Activated CD4-positive, alpha-beta T cell treated with anti-CD3 and anti-CD28 coated beads for 36 hours (primary cell): ENCODE measurements at regions of chrX and their contacts with region 1.

Region 1: GRCh38 chrX:135973548-135974278 is at the start of gene MMGT1:
- DNase-seq: peak; percentile 92
- ATAC-seq: peak; percentile 92
- H3K4me3 Mint-ChIP-seq: peak within 1 kb of the TSS; percentile 97
- H3K27ac Mint-ChIP-seq: peak within 1 kb of the TSS; percentile 97
- H3K4me1 Mint-ChIP-seq: peaks cover 34% of the 10 kb centered on the region
- H3K27me3 Mint-ChIP-seq: no peaks in the 10 kb centered on the region
- total RNA-seq, gene MMGT1: 16.1 to 18.1 TPM

Region 2: GRCh38 chrX:135003876-135004623 is 969.7 kb before region 1 on chrX:
- CTCF ChIA-PET with region 1: no interaction called
- POLR2A ChIA-PET with region 1: no interaction called
- intact Hi-C with region 1: loop called in 1 of 2 experiments (anchors 5 kb)
- DNase-seq: peak; percentile 94
- ATAC-seq: peak; percentile 98
- H3K4me3 Mint-ChIP-seq: peak overlapping the region; percentile 78
- H3K27ac Mint-ChIP-seq: peak overlapping the region; percentile 69
- H3K4me1 Mint-ChIP-seq: peaks cover 14% of the 10 kb centered on the region
- H3K27me3 Mint-ChIP-seq: no peaks in the 10 kb centered on the region

Region 3: GRCh38 chrX:135985141-135985972 is 11.6 kb after region 1 on chrX and contains the start of gene SLC9A6:
- CTCF ChIA-PET with region 1: interaction called, 4 read pairs
- POLR2A ChIA-PET with region 1: interaction called, 4 read pairs
- intact Hi-C with region 1: loop called in 1 of 2 experiments (anchors 1 kb)
- DNase-seq: peak; percentile 81
- ATAC-seq: peak; percentile 82
- H3K4me3 Mint-ChIP-seq: peak within 1 kb of the TSS; percentile 88
- H3K27ac Mint-ChIP-seq: peak within 1 kb of the TSS; percentile 90
- H3K4me1 Mint-ChIP-seq: peaks cover 51% of the 10 kb centered on the region
- H3K27me3 Mint-ChIP-seq: no peaks in the 10 kb centered on the region
- total RNA-seq, gene SLC9A6: 11.8 to 12.6 TPM

Region 4: GRCh38 chrX:136047969-136048368 is 74.3 kb after region 1 on chrX:
- CTCF ChIA-PET with region 1: no interaction called
- POLR2A ChIA-PET with region 1: no interaction called
- intact Hi-C with region 1: no loop called
- DNase-seq: no peak
- ATAC-seq: no peak
- H3K4me3 Mint-ChIP-seq: no peak overlapping the region
- H3K27ac Mint-ChIP-seq: no peak overlapping the region
- H3K4me1 Mint-ChIP-seq: no peaks in the 10 kb centered on the region
- H3K27me3 Mint-ChIP-seq: no peaks in the 10 kb centered on the region

Region 5: DNA sequence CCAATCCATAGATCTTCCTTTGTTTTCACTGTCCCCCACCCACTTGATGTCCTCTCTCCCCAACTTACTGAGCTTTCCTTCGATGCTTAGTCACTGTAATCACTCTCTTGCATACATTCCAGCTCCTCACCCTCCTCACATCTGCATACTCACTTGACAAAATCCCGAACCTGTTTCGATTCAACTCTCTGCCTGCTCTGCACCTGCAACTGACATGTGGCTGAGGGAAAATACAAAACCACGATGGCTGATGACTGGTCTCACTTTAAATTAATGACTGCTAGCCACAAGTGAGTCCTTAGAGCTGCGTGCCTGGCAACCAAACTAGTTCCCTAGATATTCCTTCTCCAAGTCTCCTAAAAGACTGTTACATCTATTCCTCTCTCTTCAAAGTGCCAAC is 103.2 kb after region 1 on chrX:
- CTCF ChIA-PET with region 1: no interaction called
- POLR2A ChIA-PET with region 1: no interaction called
- intact Hi-C with region 1: no loop called
- DNase-seq: no peak
- ATAC-seq: no peak
- H3K4me3 Mint-ChIP-seq: no peak overlapping the region
- H3K27ac Mint-ChIP-seq: no peak overlapping the region
- H3K4me1 Mint-ChIP-seq: no peaks in the 10 kb centered on the region
- H3K27me3 Mint-ChIP-seq: peaks cover 6% of the 10 kb centered on the region

Region 6: DNA sequence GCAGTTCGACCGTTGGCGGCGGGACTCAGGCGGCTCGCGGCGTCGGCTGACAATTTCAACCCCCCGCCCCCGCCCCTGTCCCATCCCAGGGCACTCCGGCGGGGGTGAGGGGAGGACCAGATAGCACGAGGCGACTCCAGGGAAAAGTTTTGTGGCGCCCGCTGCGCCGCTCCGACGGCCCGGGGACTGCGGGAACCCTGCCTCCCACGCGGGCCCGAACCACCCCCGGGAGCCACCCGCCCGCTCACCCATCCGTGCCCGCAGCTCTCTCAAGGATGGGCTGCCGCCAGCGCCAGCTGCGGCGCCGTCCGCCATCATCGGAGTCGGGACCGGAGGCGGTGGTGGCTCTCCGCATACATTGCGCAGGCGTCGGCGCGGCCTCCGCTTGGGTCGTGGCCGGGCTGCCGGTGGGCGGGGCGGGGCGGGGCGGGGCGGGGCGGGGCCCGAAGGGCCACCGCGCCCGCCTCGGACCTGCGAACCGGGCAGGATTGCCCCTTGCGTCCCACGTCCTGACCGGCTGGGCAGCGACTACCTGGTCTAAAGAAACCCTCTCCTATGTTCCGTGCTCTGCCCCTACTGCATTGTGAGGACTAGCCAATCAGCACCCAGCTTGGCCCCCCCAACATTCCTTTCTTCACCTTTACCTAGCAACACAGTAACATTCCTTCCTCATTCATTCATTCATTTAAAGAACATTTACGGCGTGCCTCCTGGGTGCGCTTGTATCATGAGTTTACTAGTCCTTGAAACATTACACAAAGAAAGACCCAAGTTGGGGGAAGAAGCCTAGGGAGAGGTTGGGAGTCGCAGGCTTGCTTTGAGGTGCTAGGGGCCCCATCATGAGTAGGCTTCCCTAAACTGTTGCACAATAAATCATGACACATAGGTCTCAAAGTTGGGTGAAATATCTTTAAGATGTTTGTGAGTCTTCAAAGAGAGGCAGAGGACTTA is 277.6 kb after region 1 on chrX and contains the start of gene MAP7D3:
- CTCF ChIA-PET with region 1: no interaction called
- POLR2A ChIA-PET with region 1: no interaction called
- intact Hi-C with region 1: loop called in 1 of 2 experiments (anchors 1 kb)
- DNase-seq: peak; percentile 80
- ATAC-seq: peak; percentile 91
- H3K4me3 Mint-ChIP-seq: peak within 1 kb of the TSS; percentile 81
- H3K27ac Mint-ChIP-seq: peak within 1 kb of the TSS; percentile 80
- H3K4me1 Mint-ChIP-seq: peaks cover 8% of the 10 kb centered on the region
- H3K27me3 Mint-ChIP-seq: no peaks in the 10 kb centered on the region
- total RNA-seq, gene MAP7D3: 16.8 to 22.7 TPM